ENCODE measurements at regions of chr17 and their contacts with region 1.

Region 1: GRCh38 chr17:75405365-75406221 is at the start of gene GRB2:
- DNase-seq: peak; percentile 99
- ATAC-seq: peak; percentile 81
- H3K4me3 ChIP-seq: peak within 1 kb of the TSS; percentile 96
- H3K27ac ChIP-seq: peak within 1 kb of the TSS; percentile 12
- H3K4me1 ChIP-seq: peaks cover 14% of the 10 kb centered on the region
- H3K27me3 ChIP-seq: no peaks in the 10 kb centered on the region
- CTCF ChIP-seq: no peak
- total RNA-seq, gene GRB2: 224 and 282 TPM in 2 replicates

Region 2: DNA sequence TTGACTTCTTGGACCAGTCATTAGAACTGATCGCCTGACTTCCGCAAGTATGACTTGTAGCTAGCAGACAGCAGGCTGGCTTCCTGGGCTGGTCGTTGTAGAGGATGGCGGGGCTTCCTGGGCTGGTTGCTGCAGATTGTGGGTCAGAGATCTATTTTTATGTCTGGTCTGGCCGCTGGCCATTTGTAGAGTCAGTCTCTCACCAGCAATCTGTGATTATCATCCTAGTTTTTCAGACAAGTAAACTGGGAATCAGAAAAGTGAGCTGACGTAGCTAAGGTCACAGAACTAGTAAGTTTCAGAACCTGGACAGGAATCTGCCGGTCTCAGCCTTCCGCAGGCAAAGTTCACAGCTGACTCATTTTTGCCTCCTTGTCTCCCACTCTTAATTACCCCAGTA is 1019.2 kb before region 1 on chr17:
- CTCF ChIA-PET with region 1: no interaction called
- POLR2A ChIA-PET with region 1: no interaction called
- intact Hi-C with region 1: no loop called
- DNase-seq: no peak
- ATAC-seq: no peak
- H3K4me3 ChIP-seq: no peak overlapping the region
- H3K27ac ChIP-seq: no peak overlapping the region
- H3K4me1 ChIP-seq: no peaks in the 10 kb centered on the region; the same call in 1 of the 2 replicates
- H3K27me3 ChIP-seq: no peaks in the 10 kb centered on the region
- CTCF ChIP-seq: no peak

Region 3: GRCh38 chr17:75271233-75271954 is 134.2 kb before region 1 on chr17:
- CTCF ChIA-PET with region 1: interaction called, 9 read pairs
- POLR2A ChIA-PET with region 1: interaction called, 33 read pairs
- intact Hi-C with region 1: loop called (anchors 1 kb)
- DNase-seq: peak; percentile 90
- ATAC-seq: peak; percentile 53
- H3K4me3 ChIP-seq: peak overlapping the region; percentile 73
- H3K27ac ChIP-seq: peak overlapping the region; percentile 36
- H3K4me1 ChIP-seq: peaks cover 20% of the 10 kb centered on the region
- H3K27me3 ChIP-seq: no peaks in the 10 kb centered on the region
- CTCF ChIP-seq: peak; percentile 57

Region 4: DNA sequence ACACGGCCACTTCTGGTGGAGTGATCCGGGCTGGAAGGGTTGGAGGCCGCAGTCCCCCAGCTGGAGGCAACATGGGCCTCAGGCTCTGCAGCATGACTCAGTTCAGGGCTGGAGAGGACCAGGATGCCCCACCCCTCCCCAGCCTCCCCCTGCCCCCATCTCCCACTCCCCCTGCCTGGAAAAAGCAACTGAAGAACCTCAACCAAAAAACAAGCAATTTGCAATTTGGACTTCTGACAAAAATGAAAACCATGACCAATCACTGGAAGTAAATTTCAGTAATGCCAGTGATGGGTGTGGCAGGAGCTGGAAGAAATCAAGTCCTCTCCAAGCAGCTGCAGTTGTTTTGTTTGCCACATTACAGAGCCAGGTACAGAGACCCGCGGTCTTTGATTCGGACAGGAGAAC is 127.9 kb before region 1 on chr17:
- CTCF ChIA-PET with region 1: interaction called, 11 read pairs
- POLR2A ChIA-PET with region 1: no interaction called
- intact Hi-C with region 1: no loop called
- DNase-seq: peak; percentile 34
- ATAC-seq: peak; percentile 60
- H3K4me3 ChIP-seq: no peak overlapping the region
- H3K27ac ChIP-seq: no peak overlapping the region
- H3K4me1 ChIP-seq: peaks cover 1% of the 10 kb centered on the region
- H3K27me3 ChIP-seq: no peaks in the 10 kb centered on the region
- CTCF ChIP-seq: no peak

Region 5: DNA sequence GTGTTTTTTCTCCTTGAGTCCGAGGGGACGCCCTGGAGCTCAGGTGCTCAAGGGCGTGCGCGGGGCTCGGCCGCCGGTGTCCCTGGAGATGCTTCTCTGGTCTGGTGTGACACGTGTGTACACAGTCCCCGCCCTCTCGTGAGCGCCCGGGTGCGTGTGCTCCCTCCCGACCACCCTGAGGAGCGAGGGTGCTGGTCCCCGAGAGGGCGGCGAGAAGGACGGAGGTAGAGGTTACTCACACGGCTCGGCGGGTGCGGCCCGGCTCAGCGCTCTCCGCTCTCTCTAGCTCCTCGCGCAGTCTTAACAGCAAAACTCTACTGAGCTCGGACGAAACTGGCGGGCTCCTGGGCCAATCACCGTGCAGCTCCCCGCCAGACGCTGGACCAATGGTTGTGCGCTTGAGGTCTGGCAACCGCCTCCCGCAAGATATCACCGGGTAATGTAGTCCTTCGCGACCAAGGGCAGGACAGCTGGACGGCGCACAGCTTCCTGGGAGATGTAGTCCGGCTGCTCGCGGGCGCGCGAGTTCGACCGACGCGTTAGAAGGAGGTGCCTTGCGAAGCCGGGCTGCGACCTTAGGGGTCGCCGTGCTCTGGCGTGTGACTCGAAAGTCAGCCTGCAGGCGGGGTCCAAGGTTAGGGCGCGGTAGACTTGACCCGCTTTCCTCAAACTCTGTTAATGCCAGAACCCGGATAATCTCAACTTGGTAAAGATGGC is 116.3 kb before region 1 on chr17 and contains the start of gene SLC25A19:
- CTCF ChIA-PET with region 1: no interaction called
- POLR2A ChIA-PET with region 1: interaction called, 6 read pairs
- intact Hi-C with region 1: loop called (anchors 1 kb)
- DNase-seq: peak; percentile 99
- ATAC-seq: peak; percentile 97
- H3K4me3 ChIP-seq: peak within 1 kb of the TSS; percentile 82
- H3K27ac ChIP-seq: peak within 1 kb of the TSS; percentile 68
- H3K4me1 ChIP-seq: peaks cover 12% of the 10 kb centered on the region
- H3K27me3 ChIP-seq: no peaks in the 10 kb centered on the region
- CTCF ChIP-seq: no peak
- total RNA-seq, gene SLC25A19: 75.0 and 76.9 TPM in 2 replicates

Region 6: DNA sequence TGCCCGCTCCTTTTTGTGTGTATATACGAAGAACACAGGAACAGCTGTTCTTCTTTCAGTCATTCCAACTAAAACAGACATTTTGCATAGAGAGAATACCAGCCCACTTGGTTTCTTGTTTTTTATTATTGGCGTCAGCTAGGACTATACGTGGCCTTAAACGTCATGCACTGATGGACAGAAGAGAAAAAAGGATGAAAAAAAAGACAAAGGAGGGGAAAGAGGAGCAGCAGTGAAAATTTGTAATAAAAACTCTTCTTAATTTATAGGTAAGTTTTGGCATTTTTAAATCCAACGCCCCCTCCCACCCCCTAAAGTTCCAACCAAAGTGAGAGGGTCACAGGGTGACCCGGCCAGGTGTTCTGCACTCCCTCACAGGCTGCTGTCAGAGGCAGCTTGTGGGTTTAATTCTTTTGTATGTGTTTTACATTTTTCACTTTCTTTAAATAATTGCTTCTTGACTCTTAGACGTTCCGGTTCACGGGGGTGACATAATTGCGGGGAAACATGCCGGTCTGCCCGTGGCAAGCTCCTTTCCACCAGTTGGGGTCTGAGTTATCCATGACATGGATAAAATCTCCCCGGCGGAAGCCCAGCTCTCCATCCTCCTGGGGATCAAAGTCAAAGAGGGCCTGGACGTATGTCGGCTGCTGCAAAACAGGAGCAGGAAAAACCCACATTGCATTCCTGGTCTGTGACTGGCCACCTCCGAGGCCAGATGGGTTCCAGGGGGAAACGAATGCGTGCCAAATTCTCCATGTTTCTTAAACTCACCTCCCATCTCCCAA is 85.5 kb before region 1 on chr17:
- CTCF ChIA-PET with region 1: interaction called, 8 read pairs
- POLR2A ChIA-PET with region 1: interaction called, 11 read pairs
- intact Hi-C with region 1: loop called (anchors 1 kb)
- DNase-seq: no peak
- ATAC-seq: no peak
- H3K4me3 ChIP-seq: no peak overlapping the region
- H3K27ac ChIP-seq: no peak overlapping the region
- H3K4me1 ChIP-seq: no peaks in the 10 kb centered on the region
- H3K27me3 ChIP-seq: no peaks in the 10 kb centered on the region
- CTCF ChIP-seq: no peak

Region 7: DNA sequence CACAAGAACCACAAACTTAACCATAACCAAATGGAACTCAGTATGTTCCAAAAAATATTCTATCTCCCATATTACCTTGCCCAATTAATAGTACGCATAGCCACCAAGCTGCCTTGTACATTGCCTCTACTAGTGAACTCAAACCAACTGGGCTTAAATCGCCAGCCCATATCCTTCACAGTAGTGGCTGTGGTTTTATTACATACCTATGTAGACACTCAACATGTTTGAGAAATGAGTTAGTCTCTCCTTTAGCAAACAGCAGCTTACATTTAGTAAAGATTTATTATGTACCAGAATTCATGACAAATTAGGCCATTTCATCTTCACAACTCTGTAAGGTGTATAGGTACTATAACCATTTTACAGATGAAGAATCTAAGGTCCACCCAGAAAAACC is 41.5 kb before region 1 on chr17:
- CTCF ChIA-PET with region 1: interaction called, 5 read pairs
- POLR2A ChIA-PET with region 1: no interaction called
- intact Hi-C with region 1: loop called (anchors 2 kb)
- DNase-seq: peak; percentile 94
- ATAC-seq: peak; percentile 89
- H3K4me3 ChIP-seq: peak overlapping the region; percentile 8; the same call in 1 of the 2 replicates
- H3K27ac ChIP-seq: peak overlapping the region; percentile 45
- H3K4me1 ChIP-seq: peaks cover 73% of the 10 kb centered on the region
- H3K27me3 ChIP-seq: no peaks in the 10 kb centered on the region
- CTCF ChIP-seq: no peak

Region 8: DNA sequence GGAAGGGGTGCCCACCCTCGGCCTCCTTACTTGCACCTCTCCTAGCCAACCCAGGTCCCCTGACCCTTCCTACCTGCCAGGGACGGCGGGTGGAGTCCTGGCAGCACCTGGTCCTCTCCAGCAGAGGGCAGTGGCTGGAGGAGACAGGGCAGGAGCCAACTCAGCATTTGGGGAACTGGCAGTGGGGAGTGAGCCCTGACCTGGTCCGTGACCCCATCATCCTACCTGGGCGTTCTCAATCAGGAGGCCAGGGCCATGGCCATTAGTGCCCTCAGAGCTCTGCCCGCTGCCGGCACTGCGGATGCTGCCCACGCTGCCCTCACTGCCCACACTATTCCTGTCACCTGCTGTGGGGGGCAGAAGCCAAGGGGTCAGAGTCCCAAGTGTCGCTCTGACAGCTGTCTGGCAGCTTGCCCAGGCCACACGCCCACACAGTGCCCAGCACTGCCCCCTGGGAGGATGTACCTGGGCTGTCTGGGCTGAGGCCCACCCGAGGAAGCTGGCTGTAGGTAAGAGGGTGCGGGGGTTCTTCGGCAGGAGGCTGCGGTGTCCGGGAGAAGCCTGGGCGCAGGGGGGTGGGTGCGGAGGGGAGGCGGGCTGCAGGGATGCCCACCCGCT is 98.9 kb after region 1 on chr17:
- CTCF ChIA-PET with region 1: no interaction called
- POLR2A ChIA-PET with region 1: no interaction called
- intact Hi-C with region 1: no loop called
- DNase-seq: peak; percentile 65
- ATAC-seq: peak; percentile 67
- H3K4me3 ChIP-seq: no peak overlapping the region
- H3K27ac ChIP-seq: no peak overlapping the region
- H3K4me1 ChIP-seq: no peaks in the 10 kb centered on the region
- H3K27me3 ChIP-seq: no peaks in the 10 kb centered on the region
- CTCF ChIP-seq: peak; percentile 85

Measured in PC-3 (cell line).